ENCODE measurements at regions of chr6 and their contacts with region 1.

Region 1: GRCh38 chr6:149431905-149432775 is 32.1 kb downstream of the SUMO4 start:
- DNase-seq: peak; percentile 74 to 98 (median 94)

Region 2: GRCh38 chr6:149028767-149029405 is 403.3 kb before region 1 on chr6:
- intact Hi-C with region 1: loop called (anchors 5 kb)
- DNase-seq: peak in 34 of 42 donors; percentile 31 to 90 (median 74)

Region 3: DNA sequence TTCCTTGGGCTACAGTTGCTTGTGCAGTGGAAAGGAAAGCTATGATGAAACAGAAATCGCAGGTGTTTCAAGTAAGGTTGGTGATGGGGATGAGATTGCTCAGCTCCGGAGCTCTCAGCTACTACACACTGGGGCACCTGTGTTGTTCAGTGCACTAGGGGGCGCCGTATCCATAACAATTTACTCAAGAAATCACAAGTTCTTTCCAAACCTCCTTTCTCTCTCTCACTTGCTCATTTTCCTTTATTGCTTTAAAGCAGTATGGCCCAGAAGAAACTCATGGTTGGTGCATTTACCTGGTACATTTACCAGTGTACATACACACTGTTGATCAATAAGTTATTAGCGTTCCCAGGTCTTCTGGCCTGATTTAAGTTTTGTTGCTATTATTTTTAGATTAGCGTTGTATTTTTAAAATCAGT is 349.8 kb before region 1 on chr6:
- intact Hi-C with region 1: loop called (anchors 5 kb)
- DNase-seq: peak; percentile 52 to 93 (median 85)

Region 4: DNA sequence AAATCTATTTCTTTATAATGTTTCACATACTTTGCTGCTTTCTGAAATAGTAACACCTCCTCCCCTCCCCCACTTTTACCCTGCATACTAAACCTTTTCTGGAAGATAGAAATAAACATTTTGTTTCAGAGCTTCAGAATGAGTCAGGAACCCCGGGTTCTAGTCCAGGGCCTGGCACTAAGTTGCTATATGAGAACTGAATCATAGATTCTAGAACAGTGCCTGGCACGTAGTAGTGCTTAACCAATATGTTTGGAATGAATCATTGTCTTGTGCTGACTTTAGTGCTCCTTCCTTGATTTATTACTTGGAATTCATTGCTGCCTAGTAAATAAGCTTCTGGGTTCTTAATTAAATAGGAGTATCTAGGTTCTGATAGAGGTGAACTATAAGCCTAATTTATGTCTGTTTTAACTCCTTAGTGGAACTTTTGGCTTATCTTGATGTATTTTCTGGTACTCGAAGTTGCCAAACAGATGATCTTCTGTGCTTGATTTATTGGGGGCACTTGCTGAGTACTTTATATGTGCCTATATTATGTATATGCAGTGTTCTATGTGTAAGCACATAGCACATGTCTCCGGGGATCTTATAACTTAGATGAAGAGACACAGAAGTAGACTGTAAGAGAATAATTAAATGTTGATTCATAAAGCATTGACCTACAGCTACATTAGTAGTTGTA is 96.1 kb before region 1 on chr6:
- intact Hi-C with region 1: loop called (anchors 10 kb)
- DNase-seq: peak in 1 of 42 donors; percentile 10

Region 5: GRCh38 chr6:149410557-149410956 is 21.6 kb before region 1 on chr6:
- intact Hi-C with region 1: no loop called
- DNase-seq: no peak

Measured in head of caudate nucleus (tissue), 42 donors.